ENCODE measurements at regions of chr2 and their contacts with region 1.

Region 1: GRCh38 chr2:231452799-231453508 is 11.3 kb downstream of the NCL start:
- DNase-seq: no peak
- ATAC-seq: no peak

Region 2: DNA sequence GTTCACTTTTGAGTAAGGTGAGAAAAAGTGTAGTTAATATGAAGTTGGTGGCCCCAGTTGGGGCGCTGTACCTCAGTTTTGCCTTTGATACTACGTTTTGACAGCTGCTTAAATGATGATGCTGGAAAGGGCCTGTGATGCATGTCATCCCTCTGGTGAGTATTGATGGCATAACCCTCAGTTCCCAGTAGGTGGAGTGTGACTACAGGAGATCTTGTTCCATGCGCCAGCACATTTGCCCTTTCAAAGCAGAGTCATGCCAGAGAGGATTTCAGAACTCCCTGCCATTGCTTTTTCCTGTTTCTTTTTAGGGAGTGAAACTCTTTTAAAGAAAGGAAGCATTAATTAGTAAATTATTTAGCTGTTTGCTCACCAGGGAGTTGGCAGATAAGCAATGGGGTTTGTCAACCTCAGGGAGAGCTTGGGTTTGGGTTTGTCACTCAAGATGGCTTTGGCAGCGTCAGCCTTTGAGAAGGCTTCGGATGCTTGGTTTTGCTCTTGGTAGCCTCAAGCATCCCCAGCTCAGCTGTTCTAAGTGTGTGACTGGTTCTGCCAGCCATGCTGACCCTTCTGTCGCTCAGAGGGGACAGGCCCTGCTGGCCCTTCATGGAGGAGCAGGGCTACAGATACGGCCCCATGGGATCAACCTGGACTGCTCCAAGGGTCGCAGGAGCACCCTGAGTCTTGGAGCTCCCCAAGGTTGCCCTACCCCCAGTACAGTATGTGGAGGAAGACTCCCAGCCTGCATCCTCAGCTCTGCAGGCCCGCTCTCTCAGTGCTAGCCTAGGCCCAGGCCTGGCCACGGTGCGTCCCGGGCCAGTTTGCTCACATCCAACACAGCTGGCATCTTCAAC is 225.4 kb before region 1 on chr2:
- intact Hi-C with region 1: loop called (anchors 1 kb)
- DNase-seq: no peak
- ATAC-seq: peak; percentile 93

Region 3: DNA sequence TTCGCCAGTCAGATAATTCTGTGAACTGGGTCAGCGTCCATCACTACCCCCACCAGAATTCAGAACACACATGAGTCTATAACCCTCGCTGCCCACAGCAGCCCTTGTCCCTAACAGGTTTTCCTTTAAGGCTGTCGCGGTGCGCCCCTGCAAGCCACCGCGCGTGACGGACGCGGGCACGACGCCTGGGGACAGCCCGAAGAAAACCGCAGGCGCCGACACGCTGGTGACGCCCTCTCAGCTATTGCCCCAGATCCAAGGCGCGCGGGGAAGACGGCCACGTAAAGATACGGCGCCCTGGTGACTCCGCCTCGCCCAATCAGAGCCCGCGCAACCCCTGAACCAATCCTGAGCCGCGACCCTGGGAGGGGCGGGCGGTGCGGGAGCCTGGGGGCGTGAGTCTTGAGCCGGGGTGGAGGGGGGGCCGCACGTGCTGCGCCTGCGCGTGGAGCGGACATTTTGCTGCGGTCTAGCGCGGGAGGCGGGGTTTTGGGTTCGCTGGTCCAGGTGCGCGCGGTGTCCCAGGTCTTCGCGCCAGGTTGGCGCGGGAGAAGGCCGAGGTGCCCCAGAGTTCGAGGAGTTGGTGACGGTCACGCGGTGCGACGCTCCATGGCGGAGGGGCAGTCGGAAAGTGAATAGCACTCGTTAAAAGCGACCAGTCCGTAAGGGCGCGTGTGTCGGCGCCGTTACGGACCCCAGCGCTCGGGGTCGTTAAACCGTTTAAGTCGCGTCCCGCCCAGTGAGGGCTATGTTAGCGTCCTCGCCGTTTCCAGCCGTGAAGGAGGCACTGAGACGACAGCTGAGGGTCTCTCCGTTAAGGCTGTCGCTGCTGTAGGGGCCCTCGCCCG is 61.4 kb after region 1 on chr2:
- intact Hi-C with region 1: no loop called
- DNase-seq: peak; percentile 99
- ATAC-seq: peak; percentile 100